ENCODE measurements at regions of chr1 and their contacts with region 1.

Region 1: GRCh38 chr1:75276385-75276784 is 142.2 kb downstream of the LHX8 start:
- DNase-seq: no peak
- H3K4me3 ChIP-seq: no peak overlapping the region
- H3K27ac ChIP-seq: no peak overlapping the region
- H3K27me3 ChIP-seq: no peaks in the 10 kb centered on the region
- CTCF ChIP-seq: no peak

Region 2: DNA sequence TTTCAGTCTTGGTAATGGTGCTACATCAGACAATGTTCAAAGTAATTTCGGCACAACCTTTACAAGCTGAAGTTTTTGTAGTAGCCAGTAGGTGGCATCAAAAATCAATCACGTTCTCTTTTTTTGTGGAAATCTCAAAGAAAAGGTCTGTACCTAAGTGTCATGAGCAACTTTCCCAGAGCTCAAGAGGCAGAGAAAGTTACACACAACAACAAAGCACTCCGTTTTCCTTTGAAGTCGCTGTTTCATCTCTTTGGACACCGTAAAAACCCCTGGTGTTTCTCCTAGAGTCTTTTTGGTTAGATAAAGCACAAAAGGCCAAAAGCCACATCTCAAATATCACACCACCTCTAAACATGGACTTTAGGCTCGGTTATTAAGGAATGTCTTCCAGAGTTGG is 10.6 kb before region 1 on chr1:
- CTCF ChIA-PET with region 1: interaction called, 18 read pairs
- POLR2A ChIA-PET with region 1: no interaction called
- DNase-seq: no peak
- H3K4me3 ChIP-seq: no peak overlapping the region
- H3K27ac ChIP-seq: no peak overlapping the region
- H3K27me3 ChIP-seq: no peaks in the 10 kb centered on the region
- CTCF ChIP-seq: peak; percentile 61